Psoas muscle (tissue), 8 donors: ENCODE measurements at regions of chr14 and their contacts with region 1.

Region 1: DNA sequence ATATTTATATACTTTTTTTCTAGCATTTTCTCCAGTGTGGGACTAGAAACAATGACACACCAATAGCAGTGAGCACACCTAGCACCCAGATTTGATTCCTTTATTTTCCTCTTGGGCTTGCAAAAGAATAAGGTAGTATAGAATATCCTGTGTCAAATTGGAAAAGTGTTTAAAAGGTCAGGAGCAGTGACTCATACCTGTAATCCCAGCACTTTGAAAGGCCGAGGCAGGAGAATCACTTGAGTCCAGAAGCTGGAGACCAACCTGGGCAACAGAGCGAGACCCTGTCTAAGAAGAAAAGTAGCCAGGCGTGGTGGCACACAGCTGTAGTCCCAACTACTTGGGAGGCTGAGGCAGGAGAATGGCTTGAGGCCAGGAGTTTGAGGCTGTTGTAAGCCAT is 53.8 kb upstream of the SGPP1 start:
- DNase-seq: no peak
- ATAC-seq: no peak
- H3K4me3 ChIP-seq: no peak overlapping the region
- H3K27ac ChIP-seq: no peak overlapping the region
- H3K4me1 ChIP-seq: no peaks in the 10 kb centered on the region
- H3K27me3 ChIP-seq: no peaks in the 10 kb centered on the region
- CTCF ChIP-seq: no peak

Region 2: DNA sequence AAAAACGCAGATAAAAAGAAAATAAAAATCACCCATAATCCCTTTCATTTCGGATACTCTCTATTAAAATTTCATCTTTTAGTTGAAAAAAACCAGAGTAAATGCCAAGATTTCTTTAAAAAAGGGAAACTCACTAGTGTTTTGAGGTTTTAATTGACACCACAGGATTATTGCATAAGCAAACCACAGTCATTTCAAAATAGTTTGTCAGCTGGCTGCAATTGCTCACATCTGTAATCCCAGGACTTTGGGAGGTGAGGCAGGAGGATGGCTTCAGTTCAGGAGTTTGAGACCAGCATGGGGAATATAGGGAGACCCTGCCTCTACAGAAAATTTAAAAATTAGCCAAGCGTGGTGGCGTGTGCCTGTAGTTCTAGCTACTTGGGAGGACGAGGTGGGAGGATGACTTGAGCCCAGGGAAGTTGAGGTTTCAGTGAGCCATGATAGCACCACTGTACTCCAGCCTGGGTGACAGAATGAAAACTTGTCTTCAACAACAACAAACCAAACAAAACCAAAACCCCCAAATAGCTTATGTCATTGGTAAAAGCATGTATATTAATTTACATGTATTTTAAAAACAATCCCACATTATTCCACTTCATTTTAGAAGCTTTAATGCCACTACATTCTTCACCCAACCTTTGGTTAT is 119.9 kb after region 1 on chr14:
- intact Hi-C with region 1: no loop called
- DNase-seq: no peak
- ATAC-seq: peak in 2 of 4 donors; percentile 37 to 43
- H3K4me3 ChIP-seq: no peak overlapping the region
- H3K27ac ChIP-seq: no peak overlapping the region
- H3K4me1 ChIP-seq: peaks cover 15% of the 10 kb centered on the region
- H3K27me3 ChIP-seq: no peaks in the 10 kb centered on the region
- CTCF ChIP-seq: no peak

Region 3: DNA sequence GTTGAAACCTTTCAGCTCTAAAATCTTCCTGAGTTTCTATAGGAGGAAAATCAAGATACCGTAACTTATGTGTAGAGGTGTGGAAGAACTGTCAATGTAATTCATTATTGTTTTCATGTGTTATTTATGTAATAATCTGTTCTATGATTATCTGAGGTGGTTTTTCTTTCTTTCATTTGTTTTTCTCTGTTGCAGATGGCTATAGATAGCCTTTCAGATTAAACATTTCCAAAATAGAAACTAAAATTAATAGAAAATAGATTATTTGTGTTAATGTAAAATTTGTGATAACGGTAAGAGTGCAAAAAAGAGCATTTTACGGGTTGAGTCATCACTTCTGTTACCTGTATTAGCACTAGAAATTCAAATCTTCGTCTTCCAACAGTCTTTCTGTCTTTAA is 199.9 kb after region 1 on chr14:
- intact Hi-C with region 1: no loop called
- DNase-seq: no peak
- ATAC-seq: no peak
- H3K4me3 ChIP-seq: no peak overlapping the region
- H3K27ac ChIP-seq: no peak overlapping the region
- H3K4me1 ChIP-seq: no peaks in the 10 kb centered on the region
- H3K27me3 ChIP-seq: no peaks in the 10 kb centered on the region
- CTCF ChIP-seq: no peak

Region 4: DNA sequence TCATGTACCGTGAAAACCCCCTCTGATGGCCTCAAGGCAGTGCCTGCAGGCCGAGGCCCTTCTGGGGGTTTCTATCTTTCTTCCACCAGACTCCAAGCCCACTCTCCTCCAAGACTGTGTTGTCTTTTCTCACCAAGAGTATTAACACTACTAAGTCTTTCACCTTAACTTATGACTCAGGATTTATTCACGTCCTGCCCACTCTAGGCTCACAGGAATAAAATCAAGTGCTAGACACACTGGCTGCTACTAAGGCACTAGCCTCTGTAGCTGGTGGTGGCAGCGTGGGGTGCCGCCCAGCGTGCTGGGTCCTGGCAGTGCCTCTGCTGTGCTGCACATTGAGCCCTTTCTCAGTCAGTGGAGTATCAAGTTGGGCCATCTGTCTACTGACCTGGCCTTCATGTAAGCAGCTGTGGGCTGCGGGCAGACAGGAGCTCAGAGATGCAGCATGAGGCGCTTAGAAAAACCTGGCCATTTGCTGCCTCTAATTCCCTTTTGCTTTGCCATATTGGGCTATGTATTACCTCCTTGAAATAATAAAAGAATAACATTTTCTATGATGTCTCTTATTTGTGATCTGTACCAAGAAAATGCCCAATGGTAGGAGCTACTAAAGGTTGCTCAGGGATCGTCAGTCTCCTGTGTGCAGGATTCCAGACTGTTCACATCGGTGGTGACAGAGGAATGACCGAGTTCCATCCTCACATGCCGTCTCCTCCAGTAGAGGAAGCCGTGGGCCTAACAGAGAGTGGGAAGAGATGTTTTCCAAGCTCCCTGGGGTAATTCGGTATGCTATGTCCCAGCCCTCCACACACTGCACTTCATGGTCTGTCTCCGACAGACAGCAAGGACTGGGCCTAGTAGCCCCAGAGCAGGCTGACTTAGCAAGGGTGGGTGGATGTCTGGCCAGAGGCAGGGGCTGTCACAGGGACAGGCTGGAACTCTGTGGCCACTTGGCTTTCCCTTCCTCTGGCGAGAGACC is 1280.7 kb after region 1 on chr14:
- intact Hi-C with region 1: loop called in 1 of 2 experiments (anchors 5 kb)
- DNase-seq: no peak
- ATAC-seq: peak in 2 of 4 donors; percentile 16 to 22
- H3K4me3 ChIP-seq: no peak overlapping the region
- H3K27ac ChIP-seq: no peak overlapping the region
- H3K4me1 ChIP-seq: no peaks in the 10 kb centered on the region
- H3K27me3 ChIP-seq: no peaks in the 10 kb centered on the region
- CTCF ChIP-seq: no peak